ENCODE measurements at regions of chr1 and their contacts with region 1.

Region 1: DNA sequence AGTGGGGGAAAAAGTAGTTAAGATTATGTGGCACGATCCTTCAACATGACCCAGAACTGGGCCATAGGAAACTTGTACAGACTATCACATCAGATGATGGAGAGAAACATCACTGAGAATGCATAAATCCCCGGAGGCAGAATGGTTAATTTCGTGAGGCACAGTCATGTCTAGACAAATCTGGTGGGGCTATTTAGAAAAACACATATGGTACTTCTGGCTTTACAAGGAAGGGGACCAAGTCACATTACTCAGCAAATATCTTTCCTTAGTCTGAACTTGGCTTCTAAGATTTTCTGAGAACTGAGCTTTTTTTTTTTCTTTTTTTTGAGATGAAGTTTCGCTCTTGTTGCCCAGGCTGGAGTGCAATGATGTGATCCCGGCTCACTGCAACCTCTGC is 9.2 kb upstream of the UQCRHL start:
- DNase-seq: no peak

Region 2: GRCh38 chr1:15885701-15886610 is 69.3 kb after region 1 on chr1:
- intact Hi-C with region 1: no loop called
- DNase-seq: peak; percentile 98

Region 3: GRCh38 chr1:15994590-15995351 is 178.1 kb after region 1 on chr1:
- intact Hi-C with region 1: loop called (anchors 5 kb)
- DNase-seq: no peak

Measured in cardiac septum (tissue), 1 donor.